HAP-1 (cell line): ENCODE measurements at regions of chrX and their contacts with region 1.

Region 1: DNA sequence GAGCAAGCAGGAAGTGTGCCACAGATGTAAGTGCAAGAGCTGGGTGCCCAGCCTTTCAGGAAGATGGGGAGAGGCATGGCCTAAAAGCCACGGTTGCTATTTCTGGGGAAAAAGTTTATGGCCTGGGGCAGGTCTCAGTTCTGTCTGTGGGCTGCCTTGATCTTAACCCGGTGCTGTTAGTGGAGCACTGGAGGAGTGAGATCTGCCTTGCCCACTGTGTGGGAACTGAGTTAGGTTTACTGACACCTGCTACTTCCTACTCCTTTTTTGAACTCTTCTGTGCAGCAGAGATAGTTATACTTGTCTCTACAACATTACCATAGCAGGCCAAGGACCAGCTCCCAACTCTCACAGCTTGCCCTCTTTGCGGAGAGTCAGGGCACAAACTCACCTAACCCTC is 76.5 kb downstream of the ITM2A start:
- DNase-seq: no peak
- H3K4me3 ChIP-seq: no peak overlapping the region
- H3K4me1 ChIP-seq: no peaks in the 10 kb centered on the region; the same call in 1 of the 2 replicates
- H3K27me3 ChIP-seq: no peaks in the 10 kb centered on the region

Region 2: GRCh38 chrX:78838711-78839110 is 451.9 kb before region 1 on chrX:
- in situ Hi-C with region 1: no loop called
- DNase-seq: no peak
- H3K4me3 ChIP-seq: no peak overlapping the region
- H3K4me1 ChIP-seq: no peaks in the 10 kb centered on the region
- H3K27me3 ChIP-seq: no peaks in the 10 kb centered on the region

Region 3: DNA sequence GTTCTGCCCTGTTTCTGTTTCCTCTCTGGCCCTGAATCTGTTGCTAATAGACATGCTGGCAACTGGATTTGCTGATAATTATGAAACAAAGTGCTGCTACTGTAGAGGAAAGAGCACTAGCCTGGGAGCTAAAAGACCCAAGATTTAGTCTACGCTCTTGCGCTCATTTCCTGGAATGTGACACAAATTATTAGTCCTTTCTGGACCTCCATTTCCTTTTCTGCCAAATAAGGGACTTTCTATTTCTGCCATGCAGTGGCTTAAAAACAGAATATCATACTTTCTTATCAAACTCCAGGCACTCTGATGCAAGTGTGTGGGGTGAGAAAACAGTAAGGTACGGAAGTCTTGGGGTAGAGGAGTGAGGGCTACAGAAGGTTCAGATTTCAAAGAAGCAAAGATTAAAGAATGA is 194.4 kb before region 1 on chrX:
- in situ Hi-C with region 1: no loop called
- DNase-seq: no peak
- H3K4me3 ChIP-seq: no peak overlapping the region
- H3K4me1 ChIP-seq: no peaks in the 10 kb centered on the region
- H3K27me3 ChIP-seq: no peaks in the 10 kb centered on the region

Region 4: DNA sequence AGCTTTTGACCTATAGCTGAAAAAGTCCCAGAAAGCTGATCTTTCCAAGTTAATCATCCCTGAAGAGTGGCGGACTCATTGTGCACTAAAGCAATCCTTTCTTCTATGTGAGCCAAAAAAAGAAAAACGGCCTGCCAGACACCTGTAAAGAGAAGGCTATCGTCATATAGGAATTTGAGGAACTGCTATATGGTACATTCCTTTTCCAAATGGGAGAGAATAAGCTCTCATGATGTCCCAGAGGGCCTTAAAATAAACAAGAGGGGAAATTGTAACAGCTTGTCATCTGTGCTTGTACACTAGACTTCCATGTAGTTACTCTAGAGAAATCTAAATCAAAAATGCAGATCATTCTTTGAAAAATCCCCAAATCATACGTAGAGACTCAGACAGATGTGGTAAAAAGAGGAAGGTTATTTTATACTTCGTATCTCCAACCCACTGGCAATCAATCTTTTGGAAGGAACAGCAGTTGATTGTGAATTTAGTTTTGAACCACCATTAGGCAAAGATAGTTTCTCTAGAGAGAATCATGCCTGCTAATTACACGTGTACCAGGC is 120.0 kb before region 1 on chrX:
- in situ Hi-C with region 1: no loop called
- DNase-seq: no peak
- H3K4me3 ChIP-seq: no peak overlapping the region
- H3K4me1 ChIP-seq: no peaks in the 10 kb centered on the region
- H3K27me3 ChIP-seq: no peaks in the 10 kb centered on the region

Region 5: GRCh38 chrX:79366873-79367749 is 76.5 kb after region 1 on chrX and contains the start of gene ITM2A:
- in situ Hi-C with region 1: loop called (anchors 5 kb)
- DNase-seq: peak; percentile 68 to 84
- H3K4me3 ChIP-seq: peak within 1 kb of the TSS; percentile 47
- H3K4me1 ChIP-seq: peaks cover 19% of the 10 kb centered on the region
- H3K27me3 ChIP-seq: no peaks in the 10 kb centered on the region

Region 6: GRCh38 chrX:79444694-79445210 is 154.2 kb after region 1 on chrX:
- in situ Hi-C with region 1: loop called (anchors 10 kb)
- DNase-seq: no peak
- H3K4me3 ChIP-seq: no peak overlapping the region
- H3K4me1 ChIP-seq: peaks cover 33% of the 10 kb centered on the region
- H3K27me3 ChIP-seq: no peaks in the 10 kb centered on the region